AG04449 (cell line): ENCODE measurements at regions of chr6 and their contacts with region 1.

Region 1: GRCh38 chr6:109073344-109074132 is 21.1 kb downstream of the SESN1 start:
- DNase-seq: no peak
- H3K4me3 ChIP-seq: no peak overlapping the region
- CTCF ChIP-seq: peak; percentile 27

Region 2: GRCh38 chr6:108535114-108535742 is 538.3 kb before region 1 on chr6:
- CTCF ChIA-PET with region 1: interaction called, 197 read pairs
- POLR2A ChIA-PET with region 1: no interaction called
- DNase-seq: no peak
- H3K4me3 ChIP-seq: no peak overlapping the region
- CTCF ChIP-seq: no peak

Region 3: DNA sequence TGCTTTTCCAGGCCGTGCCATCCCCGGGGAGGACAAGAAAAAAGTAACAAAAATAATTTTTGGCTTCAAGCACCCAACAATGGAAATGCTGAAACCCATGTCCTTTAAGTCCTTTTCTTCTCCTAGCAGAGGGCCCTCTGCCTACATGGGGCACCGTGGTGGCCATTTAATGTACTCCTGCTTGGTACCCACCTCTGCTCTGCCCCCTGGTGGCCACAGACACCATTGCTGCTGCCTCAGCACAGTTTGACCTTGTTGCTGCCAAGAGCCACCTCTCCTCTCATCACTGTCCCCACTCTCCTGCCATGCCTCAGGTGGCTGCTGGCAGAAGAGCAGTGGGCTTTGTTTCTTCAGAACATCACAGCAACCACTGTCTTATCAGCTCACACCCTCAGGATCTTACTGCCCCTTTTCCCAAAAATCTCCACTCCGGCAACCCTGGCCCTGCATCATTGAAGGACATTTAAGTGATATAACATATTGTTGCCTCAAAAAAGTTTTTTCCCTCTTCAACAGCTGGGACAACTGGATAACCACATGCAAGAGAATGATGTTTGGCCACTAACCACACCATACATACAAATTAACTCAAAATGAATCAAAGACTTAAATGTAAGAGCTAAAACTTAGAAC is 238.2 kb before region 1 on chr6:
- CTCF ChIA-PET with region 1: interaction called, 43 read pairs
- POLR2A ChIA-PET with region 1: no interaction called
- DNase-seq: peak; percentile 16
- H3K4me3 ChIP-seq: no peak overlapping the region
- CTCF ChIP-seq: peak; percentile 93

Region 4: DNA sequence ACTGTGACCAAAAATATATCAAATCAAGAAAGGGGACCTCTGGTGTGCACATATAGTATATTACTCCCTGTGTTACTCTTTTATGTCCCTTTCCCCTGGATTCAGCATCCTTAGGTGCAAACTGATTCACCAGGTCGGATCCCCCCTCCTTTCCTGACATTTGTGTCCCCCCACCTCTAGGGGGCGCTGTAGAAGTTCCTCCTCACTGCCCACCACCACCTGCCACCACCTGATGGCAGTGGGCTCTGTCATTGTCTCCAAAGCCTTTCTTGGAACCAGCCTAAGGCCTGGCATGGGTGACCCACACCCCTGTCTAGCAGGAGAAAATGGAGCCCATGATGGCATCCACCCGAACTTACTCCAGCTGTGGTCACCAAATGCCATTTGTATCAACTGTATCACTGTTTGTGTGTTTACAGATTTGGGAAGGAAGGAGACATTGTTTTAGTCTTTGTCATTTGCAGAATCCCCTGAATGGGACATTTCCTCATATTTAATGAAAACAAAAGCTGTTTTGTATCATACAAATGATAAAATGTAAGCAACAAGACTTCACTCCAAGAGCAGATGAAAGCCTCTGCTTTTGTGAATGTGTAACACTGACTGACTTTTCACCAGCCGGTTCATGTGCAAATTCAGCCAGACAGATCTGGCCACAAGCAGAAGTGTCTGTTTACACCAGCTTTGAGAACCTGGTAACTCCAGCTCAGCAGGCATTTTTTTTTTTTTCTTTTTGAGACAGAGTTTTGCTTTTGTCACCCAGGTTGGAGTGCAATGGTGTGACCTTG is 159.1 kb before region 1 on chr6:
- CTCF ChIA-PET with region 1: interaction called, 15 read pairs
- POLR2A ChIA-PET with region 1: no interaction called
- DNase-seq: no peak
- H3K4me3 ChIP-seq: no peak overlapping the region
- CTCF ChIP-seq: peak; percentile 28

Region 5: DNA sequence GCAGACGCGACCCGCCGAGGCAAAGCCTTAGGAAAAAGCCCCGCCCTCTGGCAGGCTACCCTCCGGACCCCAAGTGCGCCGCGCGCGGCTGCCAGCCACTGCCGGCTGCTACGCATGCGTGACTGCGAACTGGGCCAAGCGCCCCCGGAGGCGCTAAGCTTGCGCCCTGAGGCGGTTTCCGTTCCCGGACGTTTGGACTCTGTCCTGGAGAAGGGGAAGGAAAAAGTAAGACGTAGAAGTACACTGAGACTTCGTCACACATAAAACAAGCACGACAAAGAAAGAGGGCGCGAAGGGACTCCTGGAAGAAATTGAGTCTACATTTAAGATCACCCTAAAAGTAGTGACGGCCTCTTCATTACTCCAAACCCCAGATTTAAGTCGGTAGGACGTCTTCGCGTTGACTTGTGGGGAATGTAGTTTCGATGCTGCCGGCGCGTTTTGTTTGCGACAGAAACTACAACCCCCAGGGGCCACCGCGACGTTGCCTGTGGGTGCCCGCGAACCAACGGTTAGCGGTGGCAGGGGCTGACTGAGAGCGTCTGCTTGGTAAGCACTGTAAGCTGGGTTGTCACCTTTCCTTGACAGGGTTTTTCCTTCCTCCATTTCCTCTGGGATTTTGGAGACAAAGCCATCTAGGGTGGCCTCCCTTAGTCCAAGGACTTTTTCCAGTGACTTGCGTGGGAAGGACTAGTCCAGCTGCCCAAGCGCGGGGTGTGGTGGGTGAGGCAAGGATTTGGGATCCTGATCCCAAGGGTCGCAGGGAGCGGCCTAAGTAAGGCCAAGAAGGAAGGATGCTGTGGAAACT is 21.7 kb after region 1 on chr6 and contains the start of gene CEP57L1:
- CTCF ChIA-PET with region 1: interaction called, 85 read pairs
- POLR2A ChIA-PET with region 1: interaction called, 3 read pairs
- DNase-seq: peak; percentile 85
- H3K4me3 ChIP-seq: peak within 1 kb of the TSS; percentile 91
- CTCF ChIP-seq: no peak